ENCODE measurements at regions of chr11 and their contacts with region 1.

Region 1: DNA sequence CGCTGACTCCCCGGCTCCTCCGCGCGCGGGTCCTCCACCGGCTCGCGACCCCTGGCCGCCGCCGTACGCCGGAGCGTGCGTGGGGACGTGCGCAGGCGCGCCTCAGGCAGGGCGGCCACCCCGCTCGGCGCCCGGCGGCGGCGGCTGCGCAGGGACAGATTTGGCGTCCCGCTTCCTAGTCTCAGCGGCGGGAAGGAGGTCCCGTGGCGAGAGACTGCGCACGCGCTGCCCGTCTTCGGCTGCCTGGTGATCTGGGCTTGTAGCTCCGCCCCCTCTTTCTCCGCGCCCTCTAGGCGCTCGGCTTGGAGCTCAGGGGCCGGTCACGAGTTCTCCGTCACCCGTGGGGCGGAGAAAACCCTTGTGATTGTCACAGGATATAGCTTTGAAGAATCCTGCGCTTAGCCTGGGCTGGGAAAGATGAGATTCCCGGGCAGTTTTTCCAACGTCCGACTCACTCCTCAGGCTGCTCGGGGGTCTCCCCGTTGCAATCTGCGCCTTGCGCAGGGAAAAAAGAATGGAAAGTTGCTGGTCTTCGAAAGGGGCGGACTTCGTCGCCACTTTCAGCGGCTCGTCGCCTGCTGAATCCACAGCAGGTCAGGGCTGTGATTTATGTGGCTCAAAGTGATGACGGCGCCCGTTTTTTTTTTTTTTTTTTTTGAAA is at the start of gene PATL1:
- DNase-seq: peak; percentile 95 to 99
- H3K4me3 ChIP-seq: peak within 1 kb of the TSS; percentile 81
- H3K27ac ChIP-seq: peak within 1 kb of the TSS; percentile 88
- H3K4me1 ChIP-seq: peaks cover 25% of the 10 kb centered on the region
- H3K27me3 ChIP-seq: no peaks in the 10 kb centered on the region
- CTCF ChIP-seq: no peak
- total RNA-seq, gene PATL1: 33.5 and 55.0 TPM in 2 replicates

Region 2: GRCh38 chr11:59186130-59186594 is 482.9 kb before region 1 on chr11:
- CTCF ChIA-PET with region 1: no interaction called
- POLR2A ChIA-PET with region 1: no interaction called
- intact Hi-C with region 1: loop called (anchors 5 kb)
- DNase-seq: peak; percentile 88 to 98
- H3K4me3 ChIP-seq: peak overlapping the region; percentile 52
- H3K27ac ChIP-seq: peak overlapping the region; percentile 81
- H3K4me1 ChIP-seq: peaks cover 84% of the 10 kb centered on the region
- H3K27me3 ChIP-seq: no peaks in the 10 kb centered on the region
- CTCF ChIP-seq: peak; percentile 98

Region 3: DNA sequence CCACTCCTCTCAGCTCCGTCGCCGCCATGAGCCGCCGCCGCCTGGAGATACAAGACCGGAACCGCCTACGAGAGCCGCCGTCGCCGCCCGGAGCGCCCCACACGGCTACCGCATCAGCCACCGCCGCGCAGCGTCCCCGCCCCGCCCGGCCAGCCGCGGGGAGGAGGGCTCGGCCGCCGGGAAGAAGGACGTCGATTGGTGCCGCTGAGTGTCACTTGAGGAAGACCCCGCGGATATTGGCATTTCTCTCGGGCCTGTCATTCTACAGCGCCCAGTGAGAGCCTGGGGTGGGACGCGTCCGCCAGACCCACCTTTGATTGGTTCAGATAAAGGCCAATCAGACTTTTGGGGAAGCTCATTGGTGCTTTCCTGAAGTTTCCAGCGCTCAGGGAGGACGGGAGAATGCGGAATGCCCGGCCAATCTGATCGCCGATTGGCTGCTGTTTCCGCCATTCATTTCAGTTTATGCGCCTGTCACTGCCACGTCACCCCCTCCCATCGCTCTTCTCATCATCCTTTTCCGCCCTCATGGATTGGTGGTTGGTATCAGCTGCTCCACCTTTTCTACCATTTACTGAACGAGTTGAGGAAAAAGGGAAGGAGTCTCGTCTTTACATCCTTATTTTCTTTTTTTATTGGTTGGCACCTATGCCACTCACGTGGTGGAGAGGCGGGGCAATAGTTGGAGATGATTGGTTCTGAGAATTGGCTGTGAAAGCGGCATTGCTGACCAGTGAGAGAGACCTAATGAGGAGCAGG is 53.3 kb before region 1 on chr11 and contains the start of gene OSBP:
- CTCF ChIA-PET with region 1: interaction called, 12 read pairs
- POLR2A ChIA-PET with region 1: interaction called, 12 read pairs
- intact Hi-C with region 1: loop called (anchors 1 kb)
- DNase-seq: peak; percentile 99 to 100
- H3K4me3 ChIP-seq: peak within 1 kb of the TSS; percentile 71
- H3K27ac ChIP-seq: peak within 1 kb of the TSS; percentile 67
- H3K4me1 ChIP-seq: peaks cover 37% of the 10 kb centered on the region
- H3K27me3 ChIP-seq: no peaks in the 10 kb centered on the region
- CTCF ChIP-seq: no peak
- total RNA-seq, gene OSBP: 40.4 and 49.7 TPM in 2 replicates

Region 4: GRCh38 chr11:59753650-59754493 is 84.8 kb after region 1 on chr11:
- CTCF ChIA-PET with region 1: no interaction called
- POLR2A ChIA-PET with region 1: interaction called, 29 read pairs
- intact Hi-C with region 1: loop called (anchors 1 kb)
- DNase-seq: peak; percentile 68 to 81
- H3K4me3 ChIP-seq: peak overlapping the region; percentile 92
- H3K27ac ChIP-seq: no peak overlapping the region
- H3K4me1 ChIP-seq: peaks cover 19% of the 10 kb centered on the region
- H3K27me3 ChIP-seq: no peaks in the 10 kb centered on the region
- CTCF ChIP-seq: peak; percentile 98

Region 5: DNA sequence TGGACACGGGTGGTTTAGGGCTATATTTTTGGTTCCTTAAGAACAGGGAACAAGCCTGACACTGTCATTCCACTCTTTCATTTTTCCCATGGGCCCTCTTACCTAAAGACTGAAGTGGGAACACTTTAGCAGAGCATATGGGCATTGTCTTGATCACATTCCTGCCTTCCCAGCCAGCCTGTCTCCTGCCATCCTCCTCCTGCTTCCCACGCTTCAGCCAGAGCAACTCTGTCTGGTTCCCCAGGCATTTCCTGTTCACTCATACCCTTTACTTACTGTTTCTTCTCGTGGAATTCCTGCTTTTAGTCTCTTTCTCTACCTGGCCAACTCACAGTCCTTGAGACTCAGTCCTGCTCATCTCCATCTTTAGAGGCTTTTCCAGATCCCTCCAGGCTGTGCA is 118.7 kb after region 1 on chr11:
- CTCF ChIA-PET with region 1: no interaction called
- POLR2A ChIA-PET with region 1: interaction called, 8 read pairs
- intact Hi-C with region 1: loop called (anchors 1 kb)
- DNase-seq: no peak
- H3K4me3 ChIP-seq: peak overlapping the region; percentile 21; the same call in 1 of the 2 replicates
- H3K27ac ChIP-seq: peak overlapping the region; percentile 79
- H3K4me1 ChIP-seq: peaks cover 37% of the 10 kb centered on the region
- H3K27me3 ChIP-seq: no peaks in the 10 kb centered on the region
- CTCF ChIP-seq: no peak

Region 6: DNA sequence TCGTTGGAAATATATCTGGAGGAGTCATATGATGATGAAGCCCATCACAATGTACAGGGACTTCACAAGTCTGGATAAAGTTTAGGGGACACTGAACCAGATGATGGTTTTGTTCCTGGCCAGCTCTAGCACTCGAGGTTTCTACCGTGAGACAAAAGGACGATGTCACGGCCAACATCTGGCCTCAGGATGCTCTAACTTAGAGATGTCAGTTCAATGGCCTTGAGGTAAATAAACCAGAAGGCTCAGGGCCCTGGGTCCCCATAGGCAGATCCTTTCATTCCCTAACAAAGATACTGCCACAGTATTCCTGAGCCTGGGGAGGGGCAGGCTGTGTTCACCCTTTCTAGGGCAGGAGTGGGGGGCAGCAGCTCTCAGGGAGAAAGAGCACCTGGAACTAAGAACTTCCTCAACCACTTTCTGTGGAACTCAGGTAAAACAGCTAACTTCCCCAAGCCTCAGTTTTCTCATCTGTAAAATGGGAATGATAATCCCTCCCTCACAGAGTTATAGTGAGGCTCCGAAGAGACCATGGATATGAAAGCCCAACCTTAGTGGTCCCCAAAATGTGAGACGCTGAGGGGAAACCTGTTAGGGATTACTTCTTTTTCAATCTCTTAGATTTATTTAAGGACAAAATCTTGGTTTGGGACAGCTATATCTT is 1134.3 kb after region 1 on chr11:
- CTCF ChIA-PET with region 1: no interaction called
- POLR2A ChIA-PET with region 1: no interaction called
- intact Hi-C with region 1: no loop called
- DNase-seq: no peak
- H3K4me3 ChIP-seq: no peak overlapping the region
- H3K27ac ChIP-seq: no peak overlapping the region
- H3K4me1 ChIP-seq: no peaks in the 10 kb centered on the region
- H3K27me3 ChIP-seq: peaks cover 95% of the 10 kb centered on the region
- CTCF ChIP-seq: no peak

Region 7: DNA sequence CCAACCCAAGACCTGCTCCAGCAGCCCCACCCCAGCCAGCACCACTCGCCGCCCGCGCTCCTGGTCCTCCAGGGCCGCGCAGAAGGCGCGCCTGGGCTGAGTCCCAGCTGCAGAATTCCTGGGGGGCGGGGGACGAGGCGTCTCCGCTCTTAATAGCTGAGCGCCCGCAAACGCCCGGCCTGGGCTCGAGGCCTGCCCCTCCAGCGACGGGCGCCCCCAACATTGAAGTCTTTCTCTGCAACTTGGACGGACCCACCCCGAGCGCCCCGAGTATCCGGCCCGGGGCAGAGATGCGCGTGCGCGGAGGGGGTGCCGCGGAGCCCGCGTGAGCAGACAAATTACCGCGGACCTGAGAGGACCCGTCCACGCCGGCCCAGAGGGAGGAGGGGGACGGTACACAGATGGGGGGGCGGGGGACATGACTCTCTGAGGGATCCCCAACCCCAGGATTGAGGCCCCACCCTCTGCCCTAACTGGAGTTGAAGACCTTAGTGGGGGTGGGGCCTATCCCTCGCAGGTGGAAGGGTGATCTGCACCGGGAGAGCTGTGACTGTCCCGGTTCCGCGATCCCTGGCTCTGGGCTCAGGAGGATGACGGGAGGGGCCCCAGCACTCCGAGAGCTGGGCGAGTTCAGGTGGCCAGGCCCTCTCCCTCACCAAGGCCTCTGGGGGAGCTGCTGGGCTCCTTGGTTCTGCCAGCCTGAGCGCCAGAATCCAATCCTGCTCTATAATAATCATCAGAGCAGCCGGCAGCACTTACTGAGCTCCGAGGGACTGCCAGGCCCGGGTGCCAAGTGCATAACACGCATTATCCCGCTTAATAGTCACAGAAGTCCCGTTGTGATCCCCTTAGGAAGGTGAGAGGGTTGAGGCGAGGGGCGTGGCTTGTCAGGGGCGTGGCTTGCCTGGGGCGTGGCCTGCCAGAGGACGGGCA is 1918.7 kb after region 1 on chr11:
- CTCF ChIA-PET with region 1: no interaction called
- POLR2A ChIA-PET with region 1: interaction called, 20 read pairs
- intact Hi-C with region 1: no loop called
- DNase-seq: peak; percentile 51 to 79
- H3K4me3 ChIP-seq: peak overlapping the region; percentile 55
- H3K27ac ChIP-seq: no peak overlapping the region
- H3K4me1 ChIP-seq: peaks cover 20% of the 10 kb centered on the region
- H3K27me3 ChIP-seq: peaks cover 34% of the 10 kb centered on the region; the same call in 1 of the 2 replicates
- CTCF ChIP-seq: peak; percentile 45; the same call in 1 of the 2 replicates

Measured in PC-9 (cell line).